Dorsolateral prefrontal cortex (tissue), 120 donors: ENCODE measurements at regions of chr11 and their contacts with region 1.

Region 1: DNA sequence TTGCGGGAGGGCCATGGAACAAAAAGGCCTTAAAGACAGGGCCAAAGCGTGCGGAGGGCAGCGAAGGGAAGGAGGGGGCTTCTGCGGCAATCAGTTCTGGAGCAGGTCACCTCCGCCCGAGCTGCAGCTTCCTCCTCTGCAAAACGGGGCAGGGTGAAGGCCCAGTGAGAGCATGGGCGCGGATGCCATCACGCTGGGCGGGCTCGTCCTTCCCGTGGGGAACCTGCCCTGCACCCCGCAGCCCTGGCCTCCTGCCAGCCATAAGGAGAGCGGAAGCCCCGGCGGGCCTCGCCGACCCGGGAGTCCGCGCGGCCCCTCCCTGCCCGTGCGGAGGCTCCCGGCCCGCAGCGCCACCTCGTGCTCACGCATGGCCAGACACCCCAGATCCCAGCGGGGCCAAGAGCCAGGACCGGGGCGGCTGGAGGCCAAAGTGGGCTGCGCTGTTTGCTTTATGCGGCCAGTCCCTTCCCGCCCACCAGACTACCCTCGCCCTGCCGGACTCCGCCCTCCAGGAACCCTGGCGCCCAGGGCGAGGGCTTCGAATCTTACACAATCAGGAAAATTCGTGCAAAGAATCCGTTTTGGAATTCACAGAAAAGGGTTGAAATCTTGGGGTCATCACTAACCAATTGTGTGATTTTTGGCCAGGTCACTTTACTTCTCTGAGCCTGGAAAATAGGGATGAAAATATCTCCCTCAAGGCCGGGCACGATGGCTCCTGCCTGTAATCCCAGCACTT is 16.1 kb downstream of the TSKU start:
- DNase-seq: peak in 9 of 10 donors; percentile 56 to 87 (median 73)
- H3K4me3 ChIP-seq: peak overlapping the region in 58 of 59 donors; percentile 14 to 66 (median 53)
- H3K27ac ChIP-seq: peak overlapping the region in 18 of 59 donors; percentile 1 to 83 (median 32)
- H3K27me3 ChIP-seq: no peaks in the 10 kb centered on the region
- CTCF ChIP-seq: peak; percentile 64 to 98 (median 94)

Region 2: DNA sequence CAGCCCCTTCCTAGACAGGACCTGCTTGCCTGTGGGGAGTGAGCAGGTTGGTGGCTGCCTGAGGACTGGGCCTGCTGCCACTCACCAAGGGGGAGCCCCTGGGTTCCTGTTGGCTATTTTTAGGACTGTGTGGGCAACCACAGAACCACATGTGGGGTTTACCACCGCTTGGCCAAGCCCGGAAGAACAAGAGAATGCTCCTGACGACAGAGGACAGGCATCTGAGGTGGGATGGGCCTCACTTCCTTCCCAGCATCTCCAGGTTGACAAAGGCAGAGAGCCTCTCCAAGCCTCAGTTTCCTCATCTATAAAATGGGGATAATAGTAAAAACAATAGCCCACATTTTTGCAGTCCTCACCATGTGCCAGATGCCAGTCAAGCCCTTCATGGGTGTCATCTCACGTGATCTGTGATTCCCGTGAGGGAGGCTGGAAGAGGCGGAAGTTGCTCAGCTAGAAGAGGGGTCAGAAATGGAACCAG is 172.3 kb before region 1 on chr11:
- intact Hi-C with region 1: no loop called
- DNase-seq: peak in 1 of 10 donors; percentile 35
- H3K4me3 ChIP-seq: no peak overlapping the region
- H3K27ac ChIP-seq: no peak overlapping the region
- H3K27me3 ChIP-seq: no peaks in the 10 kb centered on the region
- CTCF ChIP-seq: no peak

Region 3: GRCh38 chr11:76734456-76735420 is 64.5 kb before region 1 on chr11:
- intact Hi-C with region 1: loop called (anchors 1 kb)
- DNase-seq: no peak
- H3K4me3 ChIP-seq: peak overlapping the region in 5 of 59 donors; percentile 7 to 22 (median 13)
- H3K27ac ChIP-seq: no peak overlapping the region
- H3K27me3 ChIP-seq: no peaks in the 10 kb centered on the region
- CTCF ChIP-seq: peak in 1 of 56 donors; percentile 7

Region 4: DNA sequence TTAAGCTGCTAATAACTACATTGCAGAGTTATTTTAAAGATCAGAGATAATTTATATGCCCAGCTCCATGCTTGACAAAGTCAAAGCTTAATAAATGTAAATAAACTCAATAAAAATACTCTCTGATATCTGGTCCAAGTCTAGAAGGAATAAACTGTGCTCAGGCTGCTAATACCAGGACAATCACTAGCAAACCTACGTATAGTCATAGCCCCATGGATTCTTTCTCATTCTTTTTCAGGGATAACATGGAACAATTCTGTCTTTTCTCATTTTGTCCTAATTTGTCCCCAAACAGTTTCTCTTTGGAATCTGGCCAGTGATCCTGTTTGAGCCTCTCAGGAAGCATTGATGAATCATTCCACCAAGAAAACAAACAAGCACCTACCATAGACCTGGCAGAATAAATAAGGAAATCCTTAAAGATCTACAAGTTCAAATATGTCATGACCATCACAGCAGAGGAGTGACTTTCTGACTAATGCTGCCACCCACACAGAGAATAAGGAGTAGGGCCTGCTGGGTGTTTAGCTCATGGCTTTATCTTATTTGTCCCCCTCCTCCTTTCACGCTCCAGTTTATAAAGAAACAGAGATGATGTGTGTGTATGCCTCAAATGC is 220.9 kb after region 1 on chr11:
- intact Hi-C with region 1: no loop called
- DNase-seq: no peak
- H3K4me3 ChIP-seq: no peak overlapping the region
- H3K27ac ChIP-seq: peak overlapping the region in 1 of 59 donors; percentile 9
- H3K27me3 ChIP-seq: no peaks in the 10 kb centered on the region
- CTCF ChIP-seq: no peak